PC-9 (cell line): ENCODE measurements at regions of chr5 and their contacts with region 1.

Region 1: GRCh38 chr5:73446631-73447529 is 1.7 kb downstream of the FOXD1 start:
- DNase-seq: peak in 1 of 2 experiments; percentile 51
- H3K4me3 ChIP-seq: peak overlapping the region; percentile 87
- H3K27ac ChIP-seq: peak overlapping the region; percentile 58
- H3K4me1 ChIP-seq: peaks cover 22% of the 10 kb centered on the region
- H3K27me3 ChIP-seq: no peaks in the 10 kb centered on the region
- CTCF ChIP-seq: no peak

Region 2: DNA sequence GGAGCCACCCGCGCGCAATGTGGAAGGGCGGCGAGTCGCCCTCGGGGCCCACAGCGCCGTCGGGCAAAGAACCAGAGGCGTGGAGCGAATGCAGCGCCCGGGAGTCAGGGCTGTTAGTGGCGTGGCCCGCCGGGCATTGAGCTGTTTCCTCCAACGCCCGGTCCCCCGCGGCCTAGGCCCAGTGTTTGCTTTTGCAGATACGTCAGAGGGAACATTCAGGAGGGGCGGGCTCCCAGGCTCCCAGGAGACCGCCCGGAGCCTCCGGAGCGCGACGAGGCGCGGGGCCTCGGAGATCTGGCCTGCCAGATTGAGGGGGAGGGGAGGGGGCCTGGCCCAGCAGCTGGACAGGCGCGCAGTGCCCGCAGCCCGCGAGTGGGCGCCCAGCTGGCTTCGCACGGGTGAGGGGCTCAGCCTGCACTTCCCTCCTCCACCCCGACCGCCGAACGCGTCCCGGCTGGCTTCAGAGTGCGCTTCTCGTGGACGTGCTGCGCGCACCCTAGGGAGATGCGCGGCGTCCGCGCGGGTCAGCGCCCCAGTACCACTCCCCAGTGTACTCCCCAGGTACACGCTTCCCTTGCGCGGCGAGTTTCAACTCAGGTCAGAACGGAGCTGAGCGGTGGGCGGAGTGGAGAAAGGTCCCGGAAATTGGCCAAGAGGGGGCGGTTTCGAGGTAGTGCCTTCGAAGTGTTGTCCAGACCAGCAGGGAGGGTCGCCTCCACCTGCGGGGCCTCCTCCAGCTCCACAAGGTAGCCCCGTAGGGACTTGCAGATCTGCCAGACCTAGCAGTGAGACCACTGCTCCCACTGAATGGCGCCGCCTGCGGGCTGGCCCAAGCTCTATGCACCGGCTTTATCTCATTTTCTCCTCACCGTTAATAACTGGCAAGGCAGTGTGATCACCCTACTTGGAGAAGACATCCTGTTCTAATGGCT is 143.5 kb before region 1 on chr5:
- CTCF ChIA-PET with region 1: interaction called, 3 read pairs
- POLR2A ChIA-PET with region 1: no interaction called
- intact Hi-C with region 1: loop called (anchors 1 kb)
- DNase-seq: peak in 1 of 2 experiments; percentile 62
- H3K4me3 ChIP-seq: peak overlapping the region; percentile 52; the same call in 1 of the 2 replicates
- H3K27ac ChIP-seq: no peak overlapping the region
- H3K4me1 ChIP-seq: no peaks in the 10 kb centered on the region
- H3K27me3 ChIP-seq: no peaks in the 10 kb centered on the region
- CTCF ChIP-seq: peak; percentile 45; the same call in 1 of the 2 replicates